PC-3 (cell line): ENCODE measurements at regions of chr6 and their contacts with region 1.

Region 1: GRCh38 chr6:79813854-79814709 is 133.3 kb downstream of the ELOVL4 start:
- DNase-seq: peak; percentile 71
- ATAC-seq: peak; percentile 74
- H3K4me3 ChIP-seq: no peak overlapping the region
- H3K27ac ChIP-seq: no peak overlapping the region
- H3K4me1 ChIP-seq: no peaks in the 10 kb centered on the region
- H3K27me3 ChIP-seq: 0 out of 2 replicates have a peak, but pooled peaks cover 7% of the 10 kb centered on the region
- CTCF ChIP-seq: peak; percentile 72

Region 2: GRCh38 chr6:79777713-79778579 is 36.1 kb before region 1 on chr6:
- CTCF ChIA-PET with region 1: interaction called, 3 read pairs
- POLR2A ChIA-PET with region 1: no interaction called
- intact Hi-C with region 1: loop called (anchors 2 kb)
- DNase-seq: peak; percentile 74
- ATAC-seq: peak; percentile 94
- H3K4me3 ChIP-seq: peak overlapping the region; percentile 56
- H3K27ac ChIP-seq: no peak overlapping the region
- H3K4me1 ChIP-seq: no peaks in the 10 kb centered on the region
- H3K27me3 ChIP-seq: no peaks in the 10 kb centered on the region
- CTCF ChIP-seq: peak; percentile 87

Region 3: DNA sequence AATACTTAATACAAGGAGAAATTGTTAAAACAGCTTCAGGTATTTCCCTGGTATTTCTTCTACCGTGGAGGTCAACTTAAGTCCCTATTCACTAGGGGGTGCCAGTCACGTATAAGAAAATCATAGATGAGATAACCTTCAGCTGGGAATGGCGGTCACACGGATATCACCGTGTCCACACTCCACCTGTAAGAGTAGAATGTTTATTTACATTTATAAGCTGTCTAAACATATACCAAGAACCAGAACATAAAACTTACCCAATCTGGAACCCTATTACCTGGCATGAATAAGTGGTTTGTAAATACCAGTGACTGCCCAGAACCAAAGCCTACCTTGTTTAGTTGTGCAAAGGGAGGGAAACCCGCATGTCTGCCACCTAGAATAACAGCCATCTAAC is 135.2 kb after region 1 on chr6:
- CTCF ChIA-PET with region 1: no interaction called
- POLR2A ChIA-PET with region 1: no interaction called
- intact Hi-C with region 1: no loop called
- DNase-seq: peak; percentile 66
- ATAC-seq: no peak
- H3K4me3 ChIP-seq: peak overlapping the region; percentile 47; the same call in 1 of the 2 replicates
- H3K27ac ChIP-seq: no peak overlapping the region
- H3K4me1 ChIP-seq: peaks cover 30% of the 10 kb centered on the region
- H3K27me3 ChIP-seq: no peaks in the 10 kb centered on the region
- CTCF ChIP-seq: peak; percentile 76